Thyroid gland (tissue), 4 donors: ENCODE measurements at regions of chr11 and their contacts with region 1.

Region 1: GRCh38 chr11:126062679-126063506 is at the start of gene CDON:
- DNase-seq: peak; percentile 95
- H3K4me3 ChIP-seq: peak within 1 kb of the TSS; percentile 67 to 93 (median 77)
- H3K27ac ChIP-seq: peak within 1 kb of the TSS; percentile 75 to 90 (median 83)
- H3K4me1 ChIP-seq: peaks cover 12 to 15% of the 10 kb centered on the region in 2 donors
- H3K27me3 ChIP-seq: no peaks in the 10 kb centered on the region
- CTCF ChIP-seq: peak in 2 of 6 experiments; percentile 12 to 13
- POLR2A ChIP-seq: peak in 1 of 2 donors; percentile 73
- total RNA-seq, gene CDON: 75.8 to 168 (median 108) TPM

Region 2: GRCh38 chr11:125923012-125923579 is 139.8 kb before region 1 on chr11:
- intact Hi-C with region 1: loop called (anchors 5 kb)
- DNase-seq: peak; percentile 71 to 75
- H3K4me3 ChIP-seq: no peak overlapping the region
- H3K27ac ChIP-seq: no peak overlapping the region
- H3K4me1 ChIP-seq: no peaks in the 10 kb centered on the region
- H3K27me3 ChIP-seq: no peaks in the 10 kb centered on the region
- CTCF ChIP-seq: peak; percentile 51 to 86 (median 79)
- POLR2A ChIP-seq: no peak

Region 3: DNA sequence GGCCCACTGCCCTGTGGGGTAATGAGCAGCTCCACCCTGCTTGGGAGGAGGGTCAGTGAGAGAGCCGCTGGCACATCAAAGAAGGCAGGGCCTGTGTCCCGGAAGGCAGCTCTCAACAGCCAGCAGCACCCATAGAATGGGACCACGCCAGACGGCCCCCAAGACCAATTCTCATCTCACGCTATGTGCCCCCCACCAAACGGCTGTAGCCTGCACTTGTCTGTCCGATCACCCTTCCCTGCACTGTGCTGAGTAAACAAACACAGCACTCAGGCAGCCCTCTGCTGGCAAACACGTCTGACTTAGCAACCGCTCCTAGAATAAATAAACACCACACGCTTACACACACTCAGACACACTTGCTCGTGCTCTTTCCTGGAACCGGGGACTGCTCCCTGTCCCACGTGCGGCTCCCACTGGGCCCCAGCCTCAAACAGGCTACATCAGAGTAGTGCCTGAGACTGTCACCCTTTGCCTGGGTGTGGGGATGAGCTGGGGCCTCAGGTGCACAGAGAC is 53.0 kb after region 1 on chr11:
- intact Hi-C with region 1: loop called (anchors 2 kb)
- DNase-seq: peak; percentile 94
- H3K4me3 ChIP-seq: no peak overlapping the region
- H3K27ac ChIP-seq: peak overlapping the region; percentile 93 to 96 (median 95)
- H3K4me1 ChIP-seq: peaks cover 52 to 75% of the 10 kb centered on the region in 2 donors
- H3K27me3 ChIP-seq: no peaks in the 10 kb centered on the region
- CTCF ChIP-seq: peak in 3 of 6 experiments; percentile 27 to 34 (median 32)
- POLR2A ChIP-seq: peak in 1 of 2 donors; percentile 8

Region 4: DNA sequence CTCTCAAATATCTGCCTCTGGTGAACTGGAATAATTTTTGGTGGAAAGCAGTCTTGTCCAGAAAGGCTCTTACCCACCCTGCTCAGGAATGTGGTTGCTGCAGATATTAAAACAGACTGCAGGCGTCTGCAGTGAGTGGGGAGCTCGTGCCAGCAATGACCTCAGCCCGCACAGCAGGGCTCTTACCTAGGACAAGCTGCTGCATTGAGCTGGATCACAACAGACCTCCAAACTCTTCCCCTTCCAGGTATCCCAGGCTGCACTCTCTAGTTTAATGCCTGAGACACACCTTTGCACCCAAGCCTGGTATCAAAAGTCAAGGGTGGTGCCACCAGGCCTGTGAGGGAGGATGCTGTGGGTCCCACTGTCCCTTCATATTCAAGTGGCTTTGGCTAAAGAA is 69.4 kb after region 1 on chr11:
- intact Hi-C with region 1: no loop called
- DNase-seq: peak; percentile 96
- H3K4me3 ChIP-seq: no peak overlapping the region
- H3K27ac ChIP-seq: peak overlapping the region; percentile 89 to 98 (median 96)
- H3K4me1 ChIP-seq: peaks cover 77 to 86% of the 10 kb centered on the region in 2 donors
- H3K27me3 ChIP-seq: no peaks in the 10 kb centered on the region
- CTCF ChIP-seq: peak in 4 of 6 experiments; percentile 23 to 58 (median 34)
- POLR2A ChIP-seq: peak in 1 of 2 donors; percentile 66

Region 5: GRCh38 chr11:126186708-126187529 is 124.0 kb after region 1 on chr11:
- intact Hi-C with region 1: loop called (anchors 5 kb)
- DNase-seq: peak in 1 of 2 donors; percentile 18
- H3K4me3 ChIP-seq: no peak overlapping the region
- H3K27ac ChIP-seq: peak overlapping the region; percentile 53 to 89 (median 76)
- H3K4me1 ChIP-seq: peaks cover 15 to 22% of the 10 kb centered on the region in 2 donors
- H3K27me3 ChIP-seq: no peaks in the 10 kb centered on the region
- CTCF ChIP-seq: peak in 4 of 6 experiments; percentile 18 to 54 (median 30)
- POLR2A ChIP-seq: no peak